Naive thymus-derived CD4-positive, alpha-beta T cell (primary cell): ENCODE measurements at regions of chr6 and their contacts with region 1.

Region 1: DNA sequence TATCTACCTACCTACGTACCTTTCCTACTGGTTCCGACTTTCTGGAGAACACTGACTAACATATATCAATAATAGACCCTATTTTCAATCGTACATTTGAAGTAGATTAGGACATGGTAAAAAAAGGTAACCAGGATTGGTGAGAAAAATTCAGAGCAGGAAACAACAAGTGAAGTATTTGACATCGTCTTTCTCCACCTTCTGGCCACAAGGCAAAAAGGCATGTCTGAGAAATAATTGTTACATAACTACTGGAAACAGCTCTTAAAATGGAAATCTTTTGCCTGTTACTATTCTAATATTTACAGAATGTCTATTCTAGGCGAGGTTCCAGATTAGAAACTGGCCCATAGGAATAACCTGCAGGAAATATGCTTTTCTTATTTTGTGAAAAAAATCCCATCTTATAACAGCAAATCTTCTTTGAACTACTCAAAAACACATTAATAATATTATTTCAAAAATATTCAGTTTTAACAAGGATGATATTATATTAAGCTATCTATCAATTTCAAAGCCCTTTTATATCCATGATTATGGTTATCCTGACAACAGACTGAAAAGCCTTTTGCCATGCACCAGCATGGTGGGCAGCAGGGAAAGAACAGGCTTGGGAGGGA is 80.8 kb downstream of the RCAN2 start:
- DNase-seq: peak in 6 of 9 donors; percentile 20 to 61 (median 40)
- ATAC-seq: no peak
- H3K4me3 ChIP-seq: no peak overlapping the region
- H3K4me3 Mint-ChIP-seq: no peak overlapping the region
- H3K27ac ChIP-seq: no peak overlapping the region
- H3K27ac Mint-ChIP-seq: no peak overlapping the region
- H3K4me1 ChIP-seq: no peaks in the 10 kb centered on the region
- H3K4me1 Mint-ChIP-seq: no peaks in the 10 kb centered on the region
- H3K27me3 ChIP-seq: no peaks in the 10 kb centered on the region
- H3K27me3 Mint-ChIP-seq: peaks cover 0 to 4% (median 4%) of the 10 kb centered on the region in 5 donors

Region 2: DNA sequence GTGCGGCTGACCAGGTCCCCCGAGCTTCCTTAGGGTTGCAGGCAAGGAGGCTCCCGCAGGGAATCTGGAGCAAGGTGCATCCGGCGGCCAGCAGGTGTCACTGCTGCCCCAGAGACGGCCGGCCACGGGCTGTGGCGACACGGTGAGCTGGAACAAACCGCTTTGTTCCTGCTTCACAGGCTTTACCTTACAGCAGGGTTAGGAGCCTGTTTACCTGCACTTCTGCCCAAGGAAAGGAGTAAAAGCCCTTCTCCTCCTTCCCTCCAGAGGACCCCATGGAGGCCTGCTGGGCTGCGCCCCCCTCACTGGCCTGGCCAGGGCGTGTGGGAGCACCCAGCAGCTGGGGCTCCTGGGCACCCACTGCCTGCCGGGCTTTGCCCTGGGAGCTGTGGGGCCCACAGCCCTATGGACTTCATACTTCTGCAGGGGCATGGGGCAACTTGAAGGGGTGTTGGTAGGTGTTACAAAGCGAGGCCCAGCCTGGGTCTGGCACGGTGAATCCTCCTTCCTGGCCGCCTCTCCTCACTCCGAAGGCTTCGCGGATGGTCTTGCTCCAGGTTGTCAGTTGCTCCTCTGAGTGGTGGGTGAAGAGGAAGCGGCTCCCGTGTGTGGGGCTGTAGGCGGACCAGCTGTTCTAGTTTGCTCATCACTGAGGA is 1934.5 kb before region 1 on chr6:
- CTCF ChIA-PET with region 1: interaction called, 8 read pairs
- POLR2A ChIA-PET with region 1: no interaction called
- intact Hi-C with region 1: loop called in 1 of 2 experiments (anchors 2 kb)
- DNase-seq: peak; percentile 38 to 78 (median 64)
- ATAC-seq: peak; percentile 82
- H3K4me3 ChIP-seq: no peak overlapping the region
- H3K4me3 Mint-ChIP-seq: no peak overlapping the region
- H3K27ac ChIP-seq: no peak overlapping the region
- H3K27ac Mint-ChIP-seq: no peak overlapping the region
- H3K4me1 ChIP-seq: peaks cover 0 to 9% of the 10 kb centered on the region in 2 donors
- H3K4me1 Mint-ChIP-seq: peaks cover 0 to 2% (median 0%) of the 10 kb centered on the region in 7 donors
- H3K27me3 ChIP-seq: no peaks in the 10 kb centered on the region
- H3K27me3 Mint-ChIP-seq: peaks cover 0 to 8% (median 0%) of the 10 kb centered on the region in 5 donors

Region 3: DNA sequence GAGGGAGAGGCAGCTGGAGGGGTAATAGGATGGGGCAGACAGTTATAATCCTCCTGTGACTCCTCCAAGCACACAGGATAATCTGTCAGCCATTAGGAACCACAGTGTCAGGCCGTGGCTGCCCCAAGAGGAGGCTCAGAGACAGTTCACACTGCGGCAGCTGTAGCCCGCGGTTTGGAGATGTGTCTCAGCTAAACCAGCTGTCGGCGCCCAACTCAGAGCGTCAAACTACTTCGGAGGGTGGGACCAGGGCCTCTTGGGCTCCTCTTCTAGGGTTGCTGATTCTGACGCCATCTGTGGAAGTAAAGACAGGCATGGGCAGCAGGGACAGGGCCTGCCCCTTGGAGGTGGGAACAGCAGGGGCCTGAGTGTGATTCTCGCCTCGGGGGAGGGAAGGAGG is 1713.1 kb before region 1 on chr6:
- CTCF ChIA-PET with region 1: no interaction called
- POLR2A ChIA-PET with region 1: no interaction called
- intact Hi-C with region 1: no loop called
- DNase-seq: no peak
- ATAC-seq: peak; percentile 31
- H3K4me3 ChIP-seq: no peak overlapping the region
- H3K4me3 Mint-ChIP-seq: no peak overlapping the region
- H3K27ac ChIP-seq: no peak overlapping the region
- H3K27ac Mint-ChIP-seq: no peak overlapping the region
- H3K4me1 ChIP-seq: no peaks in the 10 kb centered on the region
- H3K4me1 Mint-ChIP-seq: peaks cover 0 to 7% (median 5%) of the 10 kb centered on the region in 7 donors
- H3K27me3 ChIP-seq: no peaks in the 10 kb centered on the region
- H3K27me3 Mint-ChIP-seq: peaks cover 0 to 6% (median 0%) of the 10 kb centered on the region in 5 donors

Region 4: GRCh38 chr6:45667300-45667699 is 743.1 kb before region 1 on chr6:
- CTCF ChIA-PET with region 1: no interaction called
- POLR2A ChIA-PET with region 1: no interaction called
- intact Hi-C with region 1: no loop called
- DNase-seq: no peak
- ATAC-seq: no peak
- H3K4me3 ChIP-seq: no peak overlapping the region
- H3K4me3 Mint-ChIP-seq: no peak overlapping the region
- H3K27ac ChIP-seq: no peak overlapping the region
- H3K27ac Mint-ChIP-seq: no peak overlapping the region
- H3K4me1 ChIP-seq: peaks cover 0 to 4% of the 10 kb centered on the region in 2 donors
- H3K4me1 Mint-ChIP-seq: peaks cover 5 to 41% (median 33%) of the 10 kb centered on the region in 7 donors
- H3K27me3 ChIP-seq: no peaks in the 10 kb centered on the region
- H3K27me3 Mint-ChIP-seq: peaks cover 0 to 21% (median 17%) of the 10 kb centered on the region in 5 donors

Region 5: GRCh38 chr6:45930420-45931040 is 479.9 kb before region 1 on chr6:
- CTCF ChIA-PET with region 1: interaction called, 20 read pairs
- POLR2A ChIA-PET with region 1: no interaction called
- intact Hi-C with region 1: loop called (anchors 1 kb)
- DNase-seq: peak in 8 of 9 donors; percentile 28 to 55 (median 43)
- ATAC-seq: peak; percentile 71
- H3K4me3 ChIP-seq: no peak overlapping the region
- H3K4me3 Mint-ChIP-seq: no peak overlapping the region
- H3K27ac ChIP-seq: no peak overlapping the region
- H3K27ac Mint-ChIP-seq: no peak overlapping the region
- H3K4me1 ChIP-seq: no peaks in the 10 kb centered on the region
- H3K4me1 Mint-ChIP-seq: peaks cover 0 to 5% (median 0%) of the 10 kb centered on the region in 7 donors
- H3K27me3 ChIP-seq: no peaks in the 10 kb centered on the region
- H3K27me3 Mint-ChIP-seq: peaks cover 0 to 5% (median 0%) of the 10 kb centered on the region in 5 donors

Region 6: GRCh38 chr6:46042355-46042999 is 368.0 kb before region 1 on chr6:
- CTCF ChIA-PET with region 1: interaction called, 3 read pairs
- POLR2A ChIA-PET with region 1: no interaction called
- intact Hi-C with region 1: loop called in 1 of 2 experiments (anchors 2 kb)
- DNase-seq: peak in 3 of 9 donors; percentile 1 to 13 (median 11)
- ATAC-seq: peak; percentile 61
- H3K4me3 ChIP-seq: no peak overlapping the region
- H3K4me3 Mint-ChIP-seq: no peak overlapping the region
- H3K27ac ChIP-seq: no peak overlapping the region
- H3K27ac Mint-ChIP-seq: no peak overlapping the region
- H3K4me1 ChIP-seq: no peaks in the 10 kb centered on the region
- H3K4me1 Mint-ChIP-seq: peaks cover 0 to 2% (median 0%) of the 10 kb centered on the region in 7 donors
- H3K27me3 ChIP-seq: no peaks in the 10 kb centered on the region
- H3K27me3 Mint-ChIP-seq: no peaks in the 10 kb centered on the region

Region 7: DNA sequence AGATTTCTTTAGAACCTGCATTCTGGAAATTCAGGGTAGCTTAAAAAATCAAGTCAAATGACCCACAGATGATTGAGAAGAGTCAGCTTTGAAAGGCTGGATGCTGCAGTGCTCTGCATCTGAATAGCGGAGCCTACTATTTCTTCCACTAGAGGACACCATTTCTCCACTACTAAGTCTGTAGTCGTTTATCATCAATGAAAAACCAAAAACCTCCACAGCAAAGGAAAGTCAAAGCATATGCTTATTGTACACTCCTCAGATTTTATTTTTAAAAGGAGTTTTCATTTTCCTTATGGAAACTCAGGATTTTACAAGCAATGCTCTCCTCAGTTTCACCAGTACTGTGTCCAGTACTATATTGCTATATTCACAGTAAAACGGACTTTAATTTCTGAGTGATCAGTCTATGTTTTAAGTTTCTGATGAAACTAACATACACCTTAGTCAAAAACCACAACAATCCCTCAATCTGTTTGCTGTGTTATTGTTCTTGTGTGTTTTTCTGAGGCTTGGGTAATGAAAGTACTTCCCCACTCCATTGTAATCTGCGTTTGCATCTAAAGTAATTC is 189.1 kb before region 1 on chr6:
- CTCF ChIA-PET with region 1: interaction called, 4 read pairs
- POLR2A ChIA-PET with region 1: no interaction called
- intact Hi-C with region 1: loop called in 1 of 2 experiments (anchors 1 kb)
- DNase-seq: peak in 1 of 9 donors; percentile 4
- ATAC-seq: peak; percentile 63
- H3K4me3 ChIP-seq: no peak overlapping the region
- H3K4me3 Mint-ChIP-seq: no peak overlapping the region
- H3K27ac ChIP-seq: no peak overlapping the region
- H3K27ac Mint-ChIP-seq: no peak overlapping the region
- H3K4me1 ChIP-seq: no peaks in the 10 kb centered on the region
- H3K4me1 Mint-ChIP-seq: no peaks in the 10 kb centered on the region
- H3K27me3 ChIP-seq: no peaks in the 10 kb centered on the region
- H3K27me3 Mint-ChIP-seq: peaks cover 4 to 11% (median 4%) of the 10 kb centered on the region in 5 donors

Region 8: GRCh38 chr6:46367354-46368168 is 42.9 kb before region 1 on chr6:
- CTCF ChIA-PET with region 1: no interaction called
- POLR2A ChIA-PET with region 1: no interaction called
- intact Hi-C with region 1: no loop called
- DNase-seq: no peak
- ATAC-seq: no peak
- H3K4me3 ChIP-seq: no peak overlapping the region
- H3K4me3 Mint-ChIP-seq: no peak overlapping the region
- H3K27ac ChIP-seq: no peak overlapping the region
- H3K27ac Mint-ChIP-seq: no peak overlapping the region
- H3K4me1 ChIP-seq: no peaks in the 10 kb centered on the region
- H3K4me1 Mint-ChIP-seq: peaks cover 0 to 2% (median 0%) of the 10 kb centered on the region in 7 donors
- H3K27me3 ChIP-seq: no peaks in the 10 kb centered on the region
- H3K27me3 Mint-ChIP-seq: peaks cover 4 to 16% (median 7%) of the 10 kb centered on the region in 5 donors